CD8-positive, alpha-beta T cell (primary cell): ENCODE measurements at regions of chr13 and their contacts with region 1.

Region 1: DNA sequence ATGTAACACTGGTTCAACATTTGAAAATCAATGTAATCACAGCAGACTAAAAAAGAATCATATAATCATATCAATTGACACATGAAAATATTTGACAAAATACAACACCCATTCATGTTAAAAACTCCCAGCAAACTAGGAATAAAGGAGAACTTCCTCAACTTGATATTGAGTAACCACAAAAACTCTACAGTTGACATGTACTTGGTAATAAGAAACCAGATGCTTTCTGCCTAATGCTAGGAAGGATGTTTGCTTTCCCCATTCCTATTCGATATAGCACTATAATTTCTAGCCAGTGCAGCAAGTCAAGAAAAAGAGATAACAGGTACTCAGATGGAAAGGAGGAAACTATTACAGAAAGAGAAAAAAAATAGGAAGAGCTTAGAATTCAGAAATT is 26.9 kb downstream of the UFM1 start:
- DNase-seq: no peak
- ATAC-seq: no peak
- H3K4me3 ChIP-seq: no peak overlapping the region
- H3K4me3 Mint-ChIP-seq: no peak overlapping the region
- H3K27ac ChIP-seq: no peak overlapping the region
- H3K27ac Mint-ChIP-seq: no peak overlapping the region
- H3K4me1 ChIP-seq: no peaks in the 10 kb centered on the region
- H3K4me1 Mint-ChIP-seq: no peaks in the 10 kb centered on the region
- H3K27me3 ChIP-seq: no peaks in the 10 kb centered on the region
- H3K27me3 Mint-ChIP-seq: peaks cover 29% of the 10 kb centered on the region
- CTCF ChIP-seq: no peak

Region 2: GRCh38 chr13:38321654-38322053 is 54.9 kb before region 1 on chr13:
- CTCF ChIA-PET with region 1: no interaction called
- POLR2A ChIA-PET with region 1: no interaction called
- intact Hi-C with region 1: loop called (anchors 5 to 10 kb)
- DNase-seq: no peak
- ATAC-seq: no peak
- H3K4me3 ChIP-seq: no peak overlapping the region
- H3K4me3 Mint-ChIP-seq: no peak overlapping the region
- H3K27ac ChIP-seq: no peak overlapping the region
- H3K27ac Mint-ChIP-seq: no peak overlapping the region
- H3K4me1 ChIP-seq: no peaks in the 10 kb centered on the region
- H3K4me1 Mint-ChIP-seq: no peaks in the 10 kb centered on the region
- H3K27me3 ChIP-seq: no peaks in the 10 kb centered on the region
- H3K27me3 Mint-ChIP-seq: peaks cover 15% of the 10 kb centered on the region
- CTCF ChIP-seq: no peak

Region 3: DNA sequence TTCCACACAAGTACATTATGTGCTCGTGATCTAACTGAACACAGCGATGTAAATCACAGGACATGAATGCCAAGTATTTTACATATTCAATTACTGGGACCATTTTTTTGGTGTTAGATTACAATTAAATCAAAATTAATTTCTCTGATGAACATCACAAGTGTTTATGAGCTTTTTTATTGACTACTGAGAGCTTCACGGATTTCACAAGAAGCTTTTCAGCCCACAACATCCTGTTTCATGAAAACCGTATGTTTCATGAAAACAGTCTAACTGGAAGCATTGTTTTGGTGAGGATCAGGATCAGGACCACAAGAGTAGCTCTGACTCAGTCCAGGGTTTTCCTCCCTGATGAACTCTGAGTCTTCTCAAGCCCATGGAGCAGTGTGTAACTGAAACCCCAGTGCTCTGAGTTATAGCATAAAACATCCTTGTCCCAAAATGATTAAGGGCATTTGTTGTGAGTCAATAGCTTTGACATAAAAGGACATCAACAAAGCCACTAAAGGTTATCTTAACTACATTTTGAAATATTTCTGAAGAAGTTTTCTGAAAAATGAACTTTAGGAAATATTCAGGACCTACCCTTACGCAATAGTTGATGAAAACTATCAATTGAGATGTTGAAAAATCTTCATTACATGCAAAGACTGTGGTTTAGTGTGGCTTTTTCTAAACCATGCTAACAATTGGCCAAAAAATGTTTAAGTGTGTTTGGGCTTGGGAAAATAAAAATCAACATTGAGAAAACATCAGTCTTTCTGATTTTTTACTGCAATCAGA is 22.4 kb after region 1 on chr13:
- CTCF ChIA-PET with region 1: no interaction called
- POLR2A ChIA-PET with region 1: no interaction called
- intact Hi-C with region 1: no loop called
- DNase-seq: no peak
- ATAC-seq: no peak
- H3K4me3 ChIP-seq: no peak overlapping the region
- H3K4me3 Mint-ChIP-seq: no peak overlapping the region
- H3K27ac ChIP-seq: no peak overlapping the region
- H3K27ac Mint-ChIP-seq: no peak overlapping the region
- H3K4me1 ChIP-seq: no peaks in the 10 kb centered on the region
- H3K4me1 Mint-ChIP-seq: no peaks in the 10 kb centered on the region
- H3K27me3 ChIP-seq: no peaks in the 10 kb centered on the region
- H3K27me3 Mint-ChIP-seq: peaks cover 3% of the 10 kb centered on the region
- CTCF ChIP-seq: no peak

Region 4: GRCh38 chr13:38518328-38518727 is 141.8 kb after region 1 on chr13:
- CTCF ChIA-PET with region 1: no interaction called
- POLR2A ChIA-PET with region 1: no interaction called
- intact Hi-C with region 1: no loop called
- DNase-seq: no peak
- ATAC-seq: no peak
- H3K4me3 ChIP-seq: no peak overlapping the region
- H3K4me3 Mint-ChIP-seq: no peak overlapping the region
- H3K27ac ChIP-seq: no peak overlapping the region
- H3K27ac Mint-ChIP-seq: no peak overlapping the region
- H3K4me1 ChIP-seq: no peaks in the 10 kb centered on the region
- H3K4me1 Mint-ChIP-seq: no peaks in the 10 kb centered on the region
- H3K27me3 ChIP-seq: no peaks in the 10 kb centered on the region
- H3K27me3 Mint-ChIP-seq: no peaks in the 10 kb centered on the region
- CTCF ChIP-seq: no peak